Breast epithelium (tissue), 4 donors: ENCODE measurements at regions of chr6 and their contacts with region 1.

Region 1: GRCh38 chr6:55180258-55180657 is 5.9 kb downstream of the HCRTR2 start:
- DNase-seq: no peak
- H3K4me3 ChIP-seq: no peak overlapping the region
- H3K27ac ChIP-seq: no peak overlapping the region
- H3K4me1 ChIP-seq: no peaks in the 10 kb centered on the region
- H3K27me3 ChIP-seq: peaks cover 0 to 11% of the 10 kb centered on the region in 2 donors
- CTCF ChIP-seq: no peak
- POLR2A ChIP-seq: no peak

Region 2: GRCh38 chr6:55047451-55048044 is 132.7 kb before region 1 on chr6:
- intact Hi-C with region 1: no loop called
- DNase-seq: no peak
- H3K4me3 ChIP-seq: no peak overlapping the region
- H3K27ac ChIP-seq: no peak overlapping the region
- H3K4me1 ChIP-seq: no peaks in the 10 kb centered on the region
- H3K27me3 ChIP-seq: no peaks in the 10 kb centered on the region
- CTCF ChIP-seq: no peak
- POLR2A ChIP-seq: no peak

Region 3: GRCh38 chr6:55108808-55109146 is 71.5 kb before region 1 on chr6:
- intact Hi-C with region 1: loop called (anchors 2 kb)
- DNase-seq: no peak
- H3K4me3 ChIP-seq: no peak overlapping the region
- H3K27ac ChIP-seq: no peak overlapping the region
- H3K4me1 ChIP-seq: no peaks in the 10 kb centered on the region
- H3K27me3 ChIP-seq: no peaks in the 10 kb centered on the region
- CTCF ChIP-seq: no peak
- POLR2A ChIP-seq: no peak